SK-N-SH (cell line): ENCODE measurements at regions of chr17 and their contacts with region 1.

Region 1: DNA sequence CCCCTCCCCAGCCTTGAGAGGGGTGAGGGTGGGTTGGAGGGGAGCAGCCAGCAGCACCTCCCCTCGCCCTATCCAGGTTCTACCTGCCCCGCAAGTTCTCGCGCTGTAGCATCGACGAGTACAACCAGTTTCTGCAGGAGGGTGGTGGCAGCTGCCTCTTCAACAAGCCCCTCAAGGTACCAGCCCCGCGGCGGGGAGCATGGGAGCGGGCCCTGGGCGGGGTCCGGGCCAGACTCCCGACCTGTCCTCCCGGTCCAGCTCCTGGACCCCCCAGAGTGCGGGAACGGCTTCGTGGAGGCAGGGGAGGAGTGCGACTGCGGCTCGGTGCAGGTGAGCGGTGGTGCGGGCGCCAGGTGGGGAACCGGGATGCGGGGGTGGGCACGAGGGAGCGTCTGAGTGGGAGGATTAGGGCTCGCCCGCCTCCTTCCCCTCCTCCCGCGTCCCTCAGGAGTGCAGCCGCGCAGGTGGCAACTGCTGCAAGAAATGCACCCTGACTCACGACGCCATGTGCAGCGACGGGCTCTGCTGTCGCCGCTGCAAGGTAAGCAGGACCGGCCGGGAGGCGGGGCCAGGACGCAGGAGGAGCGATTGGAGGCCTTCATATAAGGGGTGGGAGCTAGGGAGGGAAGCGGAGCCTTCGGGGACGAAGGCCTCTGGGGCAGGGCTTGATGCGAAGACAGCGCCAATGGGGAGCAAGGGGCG is 16.5 kb downstream of the ADAM11 start:
- DNase-seq: peak; percentile 98
- H3K4me3 ChIP-seq: peak overlapping the region; percentile 64 to 84
- H3K27ac ChIP-seq: no peak overlapping the region
- H3K4me1 ChIP-seq: peaks cover 0 to 31% of the 10 kb centered on the region in 2 experiments; a peak in 1 of 4 replicates
- H3K27me3 ChIP-seq: no peaks in the 10 kb centered on the region
- CTCF ChIP-seq: no peak; the same call in 1 of the 2 replicates
- EP300 ChIP-seq: no peak
- RAD21 ChIP-seq: no peak

Region 2: GRCh38 chr17:44661835-44662234 is 113.5 kb before region 1 on chr17:
- CTCF ChIA-PET with region 1: no interaction called
- POLR2A ChIA-PET with region 1: no interaction called
- DNase-seq: no peak
- H3K4me3 ChIP-seq: no peak overlapping the region
- H3K27ac ChIP-seq: no peak overlapping the region
- H3K4me1 ChIP-seq: peaks cover 0 to 7% of the 10 kb centered on the region in 2 experiments; a peak in 2 of 4 replicates
- H3K27me3 ChIP-seq: no peaks in the 10 kb centered on the region
- CTCF ChIP-seq: no peak
- EP300 ChIP-seq: no peak
- RAD21 ChIP-seq: no peak

Region 3: DNA sequence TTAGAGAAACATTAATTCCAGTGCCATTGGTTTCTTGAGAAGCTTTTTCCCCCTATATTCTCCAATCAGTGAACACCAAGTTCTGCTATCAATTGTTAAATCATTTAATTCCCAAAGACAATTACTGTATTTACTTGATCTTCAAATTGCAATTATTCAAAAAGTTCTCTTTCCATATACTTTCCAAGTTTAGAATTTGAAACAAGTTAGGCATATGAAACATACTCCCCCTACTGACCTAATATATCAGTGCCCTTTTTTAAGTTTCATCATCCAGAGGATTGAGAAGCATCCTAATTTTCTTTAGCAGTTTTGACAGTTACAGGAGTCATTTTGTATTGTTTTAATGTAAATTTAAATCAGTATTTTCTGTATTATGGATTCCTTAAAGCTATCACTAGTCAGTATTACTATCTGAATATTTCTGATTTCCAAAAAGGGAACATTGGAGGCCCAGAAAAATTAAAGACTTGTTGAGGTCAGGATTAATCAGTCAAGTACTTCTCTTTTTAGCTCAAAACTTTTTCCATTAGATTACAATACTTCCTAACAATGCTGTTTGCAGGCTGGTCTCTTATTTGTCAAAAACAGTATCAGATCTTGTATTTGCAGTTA is 102.7 kb before region 1 on chr17:
- CTCF ChIA-PET with region 1: no interaction called
- POLR2A ChIA-PET with region 1: no interaction called
- DNase-seq: peak; percentile 34
- H3K4me3 ChIP-seq: no peak overlapping the region
- H3K27ac ChIP-seq: no peak overlapping the region
- H3K4me1 ChIP-seq: 0 out of 4 replicates have a peak, but pooled peaks cover 0 to 3% of the 10 kb centered on the region in 2 experiments
- H3K27me3 ChIP-seq: no peaks in the 10 kb centered on the region
- CTCF ChIP-seq: peak; percentile 76
- EP300 ChIP-seq: no peak
- RAD21 ChIP-seq: peak; percentile 57

Region 4: DNA sequence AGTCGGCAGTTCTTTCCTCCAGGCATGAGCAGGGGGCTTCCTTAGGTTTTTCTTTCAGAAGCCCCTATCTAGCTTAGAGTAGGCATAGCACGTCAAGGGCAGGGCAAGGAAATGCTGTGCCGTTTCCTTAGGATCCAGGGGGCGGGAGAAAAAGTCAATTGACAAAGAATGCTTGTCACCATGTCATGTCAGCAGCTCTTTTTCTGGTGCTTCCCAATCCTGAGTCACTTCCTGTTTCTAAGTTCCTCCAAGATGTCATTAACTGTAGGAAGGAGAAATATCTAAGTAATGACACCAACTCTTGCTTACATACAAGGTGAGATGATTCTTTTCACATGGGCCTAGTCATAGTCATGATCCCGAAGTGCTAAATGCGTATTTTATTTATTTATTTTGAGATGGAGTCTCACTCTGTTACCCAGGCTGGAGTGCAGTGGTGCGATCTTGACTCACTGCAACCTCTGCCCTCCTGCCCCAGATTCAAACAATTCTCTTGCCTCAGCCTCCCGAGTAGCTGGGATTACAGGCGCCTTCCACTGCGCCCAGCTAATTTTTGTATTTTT is 19.6 kb after region 1 on chr17:
- CTCF ChIA-PET with region 1: interaction called, 30 read pairs
- POLR2A ChIA-PET with region 1: no interaction called
- DNase-seq: no peak
- H3K4me3 ChIP-seq: no peak overlapping the region
- H3K27ac ChIP-seq: peak overlapping the region in 1 of 2 experiments; percentile 78; a peak in 2 of 4 replicates
- H3K4me1 ChIP-seq: peaks cover 0 to 12% of the 10 kb centered on the region in 2 experiments; a peak in 1 of 4 replicates
- H3K27me3 ChIP-seq: no peaks in the 10 kb centered on the region
- CTCF ChIP-seq: no peak
- EP300 ChIP-seq: peak in 1 of 2 experiments; percentile 57; a peak in 1 of 4 replicates
- RAD21 ChIP-seq: no peak

Region 5: GRCh38 chr17:44812263-44812662 is 37.0 kb after region 1 on chr17:
- CTCF ChIA-PET with region 1: interaction called, 37 read pairs
- POLR2A ChIA-PET with region 1: no interaction called
- DNase-seq: no peak
- H3K4me3 ChIP-seq: no peak overlapping the region
- H3K27ac ChIP-seq: peak overlapping the region in 1 of 2 experiments; percentile 69; a peak in 1 of 4 replicates
- H3K4me1 ChIP-seq: peaks cover 0 to 17% of the 10 kb centered on the region in 2 experiments; a peak in 3 of 4 replicates
- H3K27me3 ChIP-seq: no peaks in the 10 kb centered on the region
- CTCF ChIP-seq: no peak
- EP300 ChIP-seq: no peak
- RAD21 ChIP-seq: no peak

Region 6: DNA sequence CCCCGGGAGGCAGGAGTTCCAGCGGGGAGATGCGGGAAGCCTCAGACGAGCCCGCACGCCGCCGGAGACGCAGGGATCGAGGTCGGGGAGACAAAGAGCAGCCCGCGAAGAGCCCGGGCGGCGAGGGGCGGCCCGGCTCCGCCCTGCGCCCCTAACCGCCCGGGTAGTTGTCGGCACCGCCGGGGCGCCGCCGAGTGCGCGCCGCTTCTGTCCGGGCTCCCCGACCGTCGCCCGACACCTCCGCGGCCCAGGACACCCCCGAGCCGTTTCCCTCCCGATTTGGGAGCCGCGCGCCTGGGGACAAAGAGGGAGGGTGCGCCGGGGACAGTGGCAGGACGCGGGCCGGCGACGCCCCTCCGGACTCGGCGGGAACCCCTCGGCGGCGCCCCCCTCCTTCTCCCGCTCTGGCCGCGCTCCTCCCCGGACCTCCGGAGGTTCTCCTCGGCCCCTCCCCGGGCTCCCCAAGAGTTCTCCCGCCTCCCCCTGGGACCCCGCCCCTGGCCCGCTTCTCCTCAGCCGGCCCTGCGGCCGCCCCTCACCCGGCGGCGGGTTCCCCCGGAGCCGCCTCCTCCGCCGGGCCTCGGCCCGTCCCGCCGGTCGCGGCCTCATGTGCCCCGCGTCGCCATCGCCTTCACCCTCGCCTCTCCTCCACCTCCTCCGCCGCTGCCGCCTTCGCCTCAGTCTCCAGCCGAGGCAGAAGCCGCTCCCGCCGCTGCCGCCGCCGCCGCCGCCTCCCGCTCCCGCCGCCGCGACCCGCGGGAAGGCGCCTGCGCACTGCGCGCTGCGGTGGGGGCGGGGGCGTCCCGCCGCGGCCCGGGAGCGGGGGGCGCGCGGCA is 54.5 kb after region 1 on chr17 and contains the start of gene GJC1:
- CTCF ChIA-PET with region 1: interaction called, 109 read pairs
- POLR2A ChIA-PET with region 1: no interaction called
- DNase-seq: peak; percentile 91
- H3K4me3 ChIP-seq: peak within 1 kb of the TSS; percentile 66 to 73
- H3K27ac ChIP-seq: peak within 1 kb of the TSS; percentile 55 to 69
- H3K4me1 ChIP-seq: peaks cover 2 to 4% of the 10 kb centered on the region in 2 experiments; a peak in 3 of 4 replicates
- H3K27me3 ChIP-seq: no peaks in the 10 kb centered on the region
- CTCF ChIP-seq: no peak
- EP300 ChIP-seq: no peak
- RAD21 ChIP-seq: no peak
- polyA plus RNA-seq, gene GJC1: 15.2 and 15.6 TPM in 2 replicates

Region 7: DNA sequence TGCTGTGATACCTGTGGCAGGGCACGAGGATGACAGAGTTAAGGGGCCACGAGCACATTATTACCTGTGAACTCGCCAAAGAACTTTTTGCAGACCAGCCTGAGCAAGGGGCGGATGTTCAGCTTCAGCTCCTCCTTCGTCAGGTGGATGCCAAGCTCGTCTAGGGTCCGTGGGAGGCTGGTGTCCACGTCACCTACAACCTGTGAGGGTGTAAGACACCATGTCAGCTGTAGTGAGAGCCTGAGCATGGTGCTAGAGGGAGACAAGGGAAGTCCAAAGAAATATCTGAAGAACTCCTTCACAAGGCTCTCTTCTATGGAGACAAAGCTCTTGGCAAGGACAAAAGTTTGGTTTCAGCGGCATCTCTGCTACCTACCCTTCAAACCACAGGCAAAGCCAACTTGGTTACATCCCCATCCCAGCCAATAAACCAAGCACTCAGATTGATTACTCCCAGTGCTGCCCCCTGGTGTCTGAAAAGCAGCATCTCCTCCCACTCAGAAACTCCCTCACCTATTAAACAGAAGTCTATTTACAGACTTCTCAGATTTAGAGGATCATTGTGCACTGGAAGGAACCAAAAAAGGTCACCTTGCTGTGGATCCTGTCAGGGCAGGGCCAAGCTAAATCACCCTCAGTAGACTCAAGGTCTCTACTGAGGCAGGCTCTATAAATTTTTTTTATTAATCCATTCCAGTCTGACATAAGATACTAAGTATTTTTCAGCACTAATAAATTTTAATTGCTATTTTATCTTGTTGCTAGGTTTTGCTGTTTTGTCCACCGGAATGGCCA is 89.8 kb after region 1 on chr17:
- CTCF ChIA-PET with region 1: interaction called, 420 read pairs
- POLR2A ChIA-PET with region 1: interaction called, 5 read pairs
- DNase-seq: peak; percentile 79
- H3K4me3 ChIP-seq: no peak overlapping the region; a peak in 1 of 4 replicates
- H3K27ac ChIP-seq: no peak overlapping the region
- H3K4me1 ChIP-seq: no peaks in the 10 kb centered on the region
- H3K27me3 ChIP-seq: 0 out of 2 replicates have a peak, but pooled peaks cover 3% of the 10 kb centered on the region
- CTCF ChIP-seq: peak; percentile 87
- EP300 ChIP-seq: no peak
- RAD21 ChIP-seq: peak; percentile 76

Region 8: DNA sequence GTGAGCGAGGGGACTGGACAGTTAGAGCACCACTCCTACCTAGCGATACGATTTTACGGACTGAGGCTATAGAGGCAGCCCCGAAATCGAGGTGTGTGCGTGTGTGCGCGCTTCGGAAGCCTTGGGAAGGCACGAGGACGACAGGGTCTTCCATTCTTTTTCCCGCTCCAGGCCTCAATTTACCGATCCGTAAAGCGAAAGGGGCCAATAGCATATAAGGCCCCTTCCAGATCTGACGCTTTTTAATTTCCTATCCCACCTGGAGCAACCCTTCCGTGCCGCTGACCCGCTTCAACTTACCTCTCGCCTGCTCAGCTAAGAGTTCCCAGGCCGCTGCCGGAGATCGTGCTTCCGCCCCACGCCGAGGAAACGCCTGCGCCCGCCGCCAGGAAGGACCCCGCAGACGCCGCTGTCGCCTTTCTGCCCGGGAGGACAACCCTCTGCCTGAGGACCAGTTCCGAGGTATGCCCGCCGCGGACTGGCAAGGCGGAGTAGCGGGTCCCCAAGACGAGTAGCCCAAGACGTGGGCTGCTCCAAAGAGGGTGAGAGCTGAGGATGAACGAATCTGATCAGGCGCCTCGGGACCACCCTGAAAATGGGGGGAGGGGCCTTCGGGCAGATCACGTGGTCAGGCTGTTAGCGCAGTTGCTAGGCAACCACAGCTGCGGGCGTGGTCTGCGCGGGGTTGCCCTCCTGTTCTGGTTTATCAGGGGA is 123.9 kb after region 1 on chr17 and contains the start of gene EFTUD2:
- CTCF ChIA-PET with region 1: interaction called, 22 read pairs
- POLR2A ChIA-PET with region 1: no interaction called
- DNase-seq: peak; percentile 96
- H3K4me3 ChIP-seq: peak within 1 kb of the TSS; percentile 92 to 97
- H3K27ac ChIP-seq: peak within 1 kb of the TSS; percentile 94 to 99
- H3K4me1 ChIP-seq: peaks cover 6 to 23% of the 10 kb centered on the region in 2 experiments; a peak in 3 of 4 replicates
- H3K27me3 ChIP-seq: no peaks in the 10 kb centered on the region
- CTCF ChIP-seq: no peak
- EP300 ChIP-seq: no peak; a peak in 1 of 4 replicates
- RAD21 ChIP-seq: no peak
- polyA plus RNA-seq, gene EFTUD2: 79.9 and 82.9 TPM in 2 replicates